Endothelial cell of umbilical vein (primary cell): ENCODE measurements at regions of chr22 and their contacts with region 1.

Region 1: GRCh38 chr22:40950962-40951794 is at the start of gene RBX1:
- DNase-seq: peak; percentile 97
- H3K4me3 ChIP-seq: peak within 1 kb of the TSS; percentile 84 to 100 (median 100)
- H3K27ac ChIP-seq: peak within 1 kb of the TSS; percentile 98
- H3K4me1 ChIP-seq: peaks cover 19% of the 10 kb centered on the region
- H3K27me3 ChIP-seq: no peaks in the 10 kb centered on the region
- CTCF ChIP-seq: no peak
- POLR2A ChIP-seq: peak; percentile 93
- total RNA-seq, gene RBX1: 74.7 and 77.7 TPM in 2 replicates

Region 2: DNA sequence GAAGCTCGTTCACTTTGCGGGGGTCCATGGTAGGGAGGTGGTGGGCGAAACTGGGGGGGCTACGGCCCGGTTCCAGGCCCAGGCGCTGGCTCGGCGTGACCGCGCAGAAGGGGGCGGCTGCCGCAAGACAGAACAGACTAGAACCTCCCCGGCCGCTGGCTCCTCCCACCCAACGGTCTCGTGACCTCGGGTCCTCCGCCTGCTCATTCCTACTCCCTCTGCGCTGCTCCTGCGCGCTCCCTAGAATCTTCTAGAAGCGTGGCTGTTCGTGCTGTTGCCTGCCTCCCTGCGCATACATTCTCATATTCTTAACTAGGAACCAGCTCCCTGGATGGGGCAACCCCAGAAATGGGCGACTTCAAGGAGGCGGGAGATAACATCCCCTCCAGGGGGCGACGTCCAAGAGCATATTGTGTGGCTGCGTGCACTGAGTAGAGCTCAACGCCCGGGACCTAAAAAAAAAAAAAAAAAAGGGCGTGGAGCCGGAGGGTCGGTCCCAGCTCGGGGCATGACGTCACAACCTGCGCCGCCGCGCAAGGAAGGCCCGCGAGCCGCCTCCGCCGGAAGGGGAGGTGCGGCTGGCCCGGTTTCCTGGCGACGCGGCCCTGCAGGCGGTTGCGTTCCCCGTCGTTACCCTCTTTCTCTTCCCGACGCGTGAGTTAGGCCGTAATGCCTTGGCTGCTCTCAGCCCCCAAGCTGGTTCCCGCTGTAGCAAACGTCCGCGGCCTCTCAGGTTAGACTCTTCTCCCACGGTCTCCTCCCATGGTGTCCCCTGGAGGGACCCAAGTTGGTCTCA is 94.5 kb before region 1 on chr22 and contains the starts of genes ST13 and XPNPEP3:
- CTCF ChIA-PET with region 1: no interaction called
- POLR2A ChIA-PET with region 1: no interaction called
- dilution Hi-C with region 1: no loop called
- intact Hi-C with region 1: loop called (anchors 1 kb)
- DNase-seq: peak; percentile 95
- H3K4me3 ChIP-seq: peak within 1 kb of the TSS; percentile 80 to 99 (median 94)
- H3K27ac ChIP-seq: peak within 1 kb of the TSS; percentile 93
- H3K4me1 ChIP-seq: peaks cover 27% of the 10 kb centered on the region
- H3K27me3 ChIP-seq: no peaks in the 10 kb centered on the region
- CTCF ChIP-seq: peak in 1 of 2 donors; percentile 27
- POLR2A ChIP-seq: peak; percentile 76
- total RNA-seq, gene ST13: 249 and 250 TPM in 2 replicates
- total RNA-seq, gene XPNPEP3: 21.2 TPM in 2 replicates

Region 3: GRCh38 chr22:41091132-41092022 is 140.2 kb after region 1 on chr22:
- CTCF ChIA-PET with region 1: interaction called, 4 read pairs
- POLR2A ChIA-PET with region 1: interaction called, 8 read pairs
- dilution Hi-C with region 1: no loop called
- intact Hi-C with region 1: loop called (anchors 1 kb)
- DNase-seq: peak; percentile 99
- H3K4me3 ChIP-seq: peak overlapping the region; percentile 99 to 100 (median 100)
- H3K27ac ChIP-seq: peak overlapping the region; percentile 98
- H3K4me1 ChIP-seq: peaks cover 25% of the 10 kb centered on the region
- H3K27me3 ChIP-seq: no peaks in the 10 kb centered on the region
- CTCF ChIP-seq: no peak
- POLR2A ChIP-seq: peak; percentile 74